B cell (primary cell): ENCODE measurements at regions of chr2 and their contacts with region 1.

Region 1: DNA sequence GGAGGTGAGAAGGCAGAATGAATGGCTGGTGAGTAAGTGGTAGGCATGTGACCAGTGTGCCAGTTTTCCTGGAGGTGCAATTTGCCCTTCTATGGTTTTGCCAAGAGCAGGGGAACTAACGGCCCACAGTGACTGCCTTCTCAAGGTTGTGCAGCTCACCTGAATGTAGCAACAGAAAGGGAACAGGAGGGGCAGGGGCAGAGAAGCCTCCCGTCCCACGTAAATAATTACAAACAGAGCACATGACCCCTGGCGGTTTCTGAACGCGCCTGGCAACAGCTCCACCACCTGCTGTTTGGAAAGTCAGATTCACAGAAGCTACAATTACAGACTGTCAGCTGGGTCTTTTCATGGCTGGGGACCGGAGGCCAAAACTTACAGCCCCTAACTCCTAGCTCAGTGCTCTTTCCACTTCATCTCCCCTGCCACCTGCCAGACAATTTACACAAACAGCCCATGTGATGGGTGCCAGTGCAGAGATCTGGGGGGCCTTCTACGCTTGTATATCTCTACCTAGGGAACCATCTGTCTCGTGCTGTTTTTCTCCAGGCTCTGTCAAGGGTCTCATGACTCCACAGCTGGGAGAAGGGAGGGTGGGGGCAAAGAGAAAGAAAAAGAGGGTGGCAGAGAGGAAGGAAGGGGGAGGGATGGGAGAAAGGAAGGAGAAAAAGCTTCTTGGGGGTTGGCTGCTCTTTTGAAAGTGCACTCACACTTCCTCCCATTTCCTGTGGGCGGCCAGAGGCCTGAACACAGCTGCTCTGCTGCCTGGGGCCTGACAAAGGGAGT is 69.6 kb downstream of the POLR1A start:
- DNase-seq: peak; percentile 93
- ATAC-seq: peak; percentile 71
- H3K4me3 ChIP-seq: peak overlapping the region; percentile 16 to 64 (median 36)
- H3K4me3 Mint-ChIP-seq: peak overlapping the region; percentile 87
- H3K27ac ChIP-seq: peak overlapping the region; percentile 98 to 99
- H3K27ac Mint-ChIP-seq: peak overlapping the region; percentile 100
- H3K4me1 ChIP-seq: peaks cover 54 to 63% of the 10 kb centered on the region in 2 donors
- H3K4me1 Mint-ChIP-seq: peaks cover 66% of the 10 kb centered on the region
- H3K27me3 ChIP-seq: no peaks in the 10 kb centered on the region
- H3K27me3 Mint-ChIP-seq: no peaks in the 10 kb centered on the region
- CTCF ChIP-seq: peak; percentile 63

Region 2: GRCh38 chr2:85804583-85804982 is 231.5 kb before region 1 on chr2:
- CTCF ChIA-PET with region 1: no interaction called
- POLR2A ChIA-PET with region 1: no interaction called
- intact Hi-C with region 1: no loop called
- DNase-seq: peak; percentile 41
- ATAC-seq: peak; percentile 57
- H3K4me3 ChIP-seq: no peak overlapping the region
- H3K4me3 Mint-ChIP-seq: no peak overlapping the region
- H3K27ac ChIP-seq: no peak overlapping the region
- H3K27ac Mint-ChIP-seq: no peak overlapping the region
- H3K4me1 ChIP-seq: no peaks in the 10 kb centered on the region
- H3K4me1 Mint-ChIP-seq: peaks cover 6% of the 10 kb centered on the region
- H3K27me3 ChIP-seq: peaks cover 0 to 17% (median 3%) of the 10 kb centered on the region in 4 experiments
- H3K27me3 Mint-ChIP-seq: peaks cover 24% of the 10 kb centered on the region
- CTCF ChIP-seq: peak; percentile 69

Region 3: DNA sequence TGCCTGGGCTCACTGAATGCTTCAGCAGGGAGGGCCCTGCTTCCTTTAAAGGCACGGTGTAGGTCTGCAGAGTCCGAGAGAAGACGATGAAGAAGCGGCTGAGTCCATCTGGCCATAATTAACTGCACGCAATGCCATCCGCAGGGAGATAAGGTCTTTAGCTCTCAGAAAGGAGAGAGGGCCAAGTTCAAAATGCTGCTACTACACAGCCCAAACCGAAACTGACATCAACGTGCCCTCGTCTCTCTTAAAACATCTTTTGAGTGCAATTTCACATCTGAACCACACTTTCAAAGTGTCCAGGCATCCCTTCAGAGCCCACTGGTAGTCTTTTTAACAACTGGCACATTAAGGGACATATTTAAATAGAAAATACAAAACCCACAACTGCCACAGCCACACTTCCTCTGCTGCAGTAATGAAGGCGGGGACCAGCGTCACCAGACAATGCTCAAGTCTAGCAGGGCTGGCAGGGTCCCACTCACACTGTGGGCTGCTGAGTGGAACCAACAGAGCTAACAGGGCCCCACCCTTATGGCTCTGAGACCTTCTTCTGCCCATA is 183.1 kb before region 1 on chr2:
- CTCF ChIA-PET with region 1: interaction called, 14 read pairs
- POLR2A ChIA-PET with region 1: interaction called, 15 read pairs
- intact Hi-C with region 1: loop called (anchors 2 kb)
- DNase-seq: peak; percentile 81
- ATAC-seq: peak; percentile 82
- H3K4me3 ChIP-seq: peak overlapping the region; percentile 29 to 56 (median 38)
- H3K4me3 Mint-ChIP-seq: peak overlapping the region; percentile 87
- H3K27ac ChIP-seq: peak overlapping the region; percentile 95 to 100
- H3K27ac Mint-ChIP-seq: peak overlapping the region; percentile 99
- H3K4me1 ChIP-seq: peaks cover 49 to 53% of the 10 kb centered on the region in 2 donors
- H3K4me1 Mint-ChIP-seq: peaks cover 70% of the 10 kb centered on the region
- H3K27me3 ChIP-seq: no peaks in the 10 kb centered on the region
- H3K27me3 Mint-ChIP-seq: no peaks in the 10 kb centered on the region
- CTCF ChIP-seq: no peak

Region 4: DNA sequence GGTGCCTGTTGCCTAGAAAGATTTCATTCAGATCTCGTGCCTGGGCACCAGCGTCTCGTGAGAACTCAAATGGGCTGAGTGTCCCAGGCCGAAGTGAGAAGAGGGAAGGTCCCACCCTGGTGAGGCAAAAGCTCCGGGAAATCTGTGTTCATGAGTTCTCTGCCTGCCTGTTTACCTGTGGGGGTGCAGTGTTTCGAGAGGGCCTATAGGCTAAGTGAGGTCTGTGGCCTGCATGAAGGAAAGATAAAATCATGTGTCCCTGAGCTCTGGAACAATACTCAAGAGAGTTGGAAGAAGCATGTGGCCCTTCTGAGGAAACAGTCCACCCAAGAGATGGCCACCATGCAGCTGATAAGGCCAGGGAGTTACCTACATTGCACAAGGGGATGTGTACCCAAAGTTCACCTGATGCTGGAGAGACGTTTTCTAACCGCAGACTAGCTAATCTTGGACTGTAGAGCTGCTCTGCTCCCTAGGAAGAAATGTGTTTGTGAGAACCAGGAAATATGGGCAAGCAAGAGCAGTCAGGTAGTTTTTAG is 83.8 kb before region 1 on chr2:
- CTCF ChIA-PET with region 1: no interaction called
- POLR2A ChIA-PET with region 1: no interaction called
- intact Hi-C with region 1: no loop called
- DNase-seq: no peak
- ATAC-seq: no peak
- H3K4me3 ChIP-seq: no peak overlapping the region
- H3K4me3 Mint-ChIP-seq: no peak overlapping the region
- H3K27ac ChIP-seq: no peak overlapping the region
- H3K27ac Mint-ChIP-seq: no peak overlapping the region
- H3K4me1 ChIP-seq: no peaks in the 10 kb centered on the region
- H3K4me1 Mint-ChIP-seq: peaks cover 2% of the 10 kb centered on the region
- H3K27me3 ChIP-seq: no peaks in the 10 kb centered on the region
- H3K27me3 Mint-ChIP-seq: no peaks in the 10 kb centered on the region
- CTCF ChIP-seq: no peak

Region 5: DNA sequence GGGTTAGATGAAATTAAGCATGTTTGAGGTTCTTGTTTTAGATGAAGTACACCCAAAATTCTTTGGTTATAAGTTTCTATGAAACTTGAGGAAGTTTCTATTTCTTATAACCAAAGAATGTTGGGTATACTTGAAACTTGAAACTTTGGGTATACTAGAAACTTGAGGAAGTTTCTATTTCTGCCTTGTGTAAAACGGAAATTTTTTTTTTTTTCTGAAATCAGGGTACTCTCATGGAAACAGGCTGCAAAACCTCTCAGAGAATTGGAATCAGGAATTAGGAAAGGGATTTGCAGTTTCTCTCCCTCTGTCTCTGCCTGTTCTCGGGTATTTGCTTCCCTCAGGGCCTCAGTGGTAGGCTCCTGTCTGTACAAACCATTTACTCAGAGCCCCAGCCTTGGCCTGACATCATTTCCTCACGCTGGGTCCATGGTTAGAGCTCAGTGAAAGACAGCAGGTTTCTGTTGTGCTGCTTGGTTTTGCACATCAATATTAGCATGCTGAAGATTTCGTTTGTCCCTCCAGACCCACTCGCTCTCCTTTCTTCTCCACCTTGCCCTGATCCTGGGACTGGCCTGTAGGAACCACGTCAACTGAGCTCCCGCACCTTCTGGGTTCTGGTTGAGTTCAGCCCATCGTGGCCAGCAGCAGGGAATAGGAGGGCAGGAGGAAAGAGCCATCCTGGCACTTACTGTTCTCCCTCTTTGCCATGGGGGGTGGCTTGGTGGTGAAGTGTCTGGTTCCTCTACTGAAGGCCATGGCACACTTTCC is 36.8 kb before region 1 on chr2:
- CTCF ChIA-PET with region 1: interaction called, 21 read pairs
- POLR2A ChIA-PET with region 1: interaction called, 17 read pairs
- intact Hi-C with region 1: loop called (anchors 1 kb)
- DNase-seq: peak; percentile 64
- ATAC-seq: peak; percentile 73
- H3K4me3 ChIP-seq: peak overlapping the region in 3 of 5 experiments; percentile 16 to 52 (median 27)
- H3K4me3 Mint-ChIP-seq: peak overlapping the region; percentile 59
- H3K27ac ChIP-seq: peak overlapping the region; percentile 79 to 87
- H3K27ac Mint-ChIP-seq: peak overlapping the region; percentile 93
- H3K4me1 ChIP-seq: peaks cover 73 to 74% of the 10 kb centered on the region in 2 donors
- H3K4me1 Mint-ChIP-seq: peaks cover 78% of the 10 kb centered on the region
- H3K27me3 ChIP-seq: no peaks in the 10 kb centered on the region
- H3K27me3 Mint-ChIP-seq: no peaks in the 10 kb centered on the region
- CTCF ChIP-seq: no peak

Region 6: DNA sequence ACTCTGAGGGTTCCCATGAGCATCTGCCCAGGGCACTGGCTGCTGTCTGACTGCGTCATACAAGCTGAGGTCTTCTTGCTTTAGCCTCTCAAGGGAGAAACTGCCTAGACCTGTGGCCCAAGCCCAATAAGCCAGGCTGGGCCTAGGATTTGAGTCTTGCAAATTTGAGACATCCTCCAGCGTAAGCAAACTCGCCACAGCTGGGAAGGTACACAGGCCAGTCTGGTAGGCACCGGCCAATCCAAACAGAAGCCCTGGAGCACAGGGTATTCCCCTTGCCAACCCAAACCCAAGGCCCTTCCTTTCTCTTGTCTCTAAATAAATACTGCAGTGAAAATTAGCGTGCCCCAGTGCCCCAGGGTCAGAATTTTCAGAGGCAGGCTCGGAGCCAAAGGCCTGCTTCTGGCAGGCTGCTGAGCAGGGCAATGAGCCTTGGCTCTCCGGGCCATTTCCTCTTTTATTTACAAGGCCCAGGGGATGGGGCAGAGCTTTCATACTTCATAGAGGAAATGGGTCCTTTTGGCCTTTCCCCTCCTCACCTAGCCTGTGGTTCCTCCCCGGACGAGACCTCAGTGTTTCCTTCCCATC is 36.3 kb after region 1 on chr2:
- CTCF ChIA-PET with region 1: interaction called, 108 read pairs
- POLR2A ChIA-PET with region 1: interaction called, 11 read pairs
- intact Hi-C with region 1: loop called (anchors 1 kb)
- DNase-seq: peak; percentile 81
- ATAC-seq: peak; percentile 89
- H3K4me3 ChIP-seq: no peak overlapping the region
- H3K4me3 Mint-ChIP-seq: peak overlapping the region; percentile 49
- H3K27ac ChIP-seq: peak overlapping the region; percentile 79
- H3K27ac Mint-ChIP-seq: peak overlapping the region; percentile 94
- H3K4me1 ChIP-seq: peaks cover 20 to 34% of the 10 kb centered on the region in 2 donors
- H3K4me1 Mint-ChIP-seq: peaks cover 30% of the 10 kb centered on the region
- H3K27me3 ChIP-seq: no peaks in the 10 kb centered on the region
- H3K27me3 Mint-ChIP-seq: no peaks in the 10 kb centered on the region
- CTCF ChIP-seq: no peak

Region 7: DNA sequence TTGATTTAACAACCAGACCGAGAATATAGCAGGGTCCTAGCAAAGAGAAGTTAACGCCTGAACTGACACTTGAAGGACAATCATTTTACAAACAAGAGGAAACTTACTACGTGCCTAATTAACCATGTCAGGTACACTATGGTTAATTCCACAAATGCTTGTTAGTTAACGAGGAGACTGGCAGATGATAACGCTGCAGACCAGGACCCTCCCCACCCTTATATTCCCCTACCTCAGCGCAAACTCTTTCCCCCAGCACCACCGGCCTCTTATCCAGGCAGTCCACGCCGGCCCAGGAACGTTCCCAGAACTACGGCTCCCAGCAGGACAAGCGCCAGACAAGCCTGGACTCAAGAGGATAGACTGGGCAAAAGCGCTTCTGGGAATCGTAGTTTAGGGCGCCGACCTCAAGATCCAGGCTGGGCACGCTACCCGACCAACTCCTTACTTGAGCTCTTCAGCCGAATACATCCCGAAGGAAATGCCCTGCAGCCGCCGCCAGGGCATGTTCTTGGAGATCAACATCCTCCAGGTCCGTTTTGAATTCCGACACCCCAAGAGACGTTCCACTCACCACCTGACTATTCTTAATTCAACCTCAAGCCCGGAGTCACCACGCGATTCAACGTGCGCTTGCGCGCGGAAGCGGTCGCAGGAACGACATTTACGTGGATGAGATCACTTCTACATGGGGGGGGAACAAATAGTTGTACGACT is 69.3 kb after region 1 on chr2 and contains the start of gene POLR1A:
- CTCF ChIA-PET with region 1: interaction called, 6 read pairs
- POLR2A ChIA-PET with region 1: interaction called, 9 read pairs
- intact Hi-C with region 1: loop called (anchors 1 kb)
- DNase-seq: peak; percentile 95
- ATAC-seq: peak; percentile 76
- H3K4me3 ChIP-seq: peak within 1 kb of the TSS; percentile 88 to 96 (median 89)
- H3K4me3 Mint-ChIP-seq: peak within 1 kb of the TSS; percentile 93
- H3K27ac ChIP-seq: peak within 1 kb of the TSS; percentile 74 to 92
- H3K27ac Mint-ChIP-seq: peak within 1 kb of the TSS; percentile 95
- H3K4me1 ChIP-seq: peaks cover 16 to 22% of the 10 kb centered on the region in 2 donors
- H3K4me1 Mint-ChIP-seq: peaks cover 50% of the 10 kb centered on the region
- H3K27me3 ChIP-seq: no peaks in the 10 kb centered on the region
- H3K27me3 Mint-ChIP-seq: no peaks in the 10 kb centered on the region
- CTCF ChIP-seq: no peak
- total RNA-seq, gene POLR1A: 32.7 and 36.8 TPM in 2 replicates